Right ventricle myocardium inferior (tissue), 1 donor: ENCODE measurements at regions of chrX and their contacts with region 1.

Region 1: GRCh38 chrX:54044126-54044876 is at the start of gene PHF8:
- DNase-seq: peak; percentile 97
- ATAC-seq: peak; percentile 96
- total RNA-seq, gene PHF8: 10.1 TPM

Region 2: DNA sequence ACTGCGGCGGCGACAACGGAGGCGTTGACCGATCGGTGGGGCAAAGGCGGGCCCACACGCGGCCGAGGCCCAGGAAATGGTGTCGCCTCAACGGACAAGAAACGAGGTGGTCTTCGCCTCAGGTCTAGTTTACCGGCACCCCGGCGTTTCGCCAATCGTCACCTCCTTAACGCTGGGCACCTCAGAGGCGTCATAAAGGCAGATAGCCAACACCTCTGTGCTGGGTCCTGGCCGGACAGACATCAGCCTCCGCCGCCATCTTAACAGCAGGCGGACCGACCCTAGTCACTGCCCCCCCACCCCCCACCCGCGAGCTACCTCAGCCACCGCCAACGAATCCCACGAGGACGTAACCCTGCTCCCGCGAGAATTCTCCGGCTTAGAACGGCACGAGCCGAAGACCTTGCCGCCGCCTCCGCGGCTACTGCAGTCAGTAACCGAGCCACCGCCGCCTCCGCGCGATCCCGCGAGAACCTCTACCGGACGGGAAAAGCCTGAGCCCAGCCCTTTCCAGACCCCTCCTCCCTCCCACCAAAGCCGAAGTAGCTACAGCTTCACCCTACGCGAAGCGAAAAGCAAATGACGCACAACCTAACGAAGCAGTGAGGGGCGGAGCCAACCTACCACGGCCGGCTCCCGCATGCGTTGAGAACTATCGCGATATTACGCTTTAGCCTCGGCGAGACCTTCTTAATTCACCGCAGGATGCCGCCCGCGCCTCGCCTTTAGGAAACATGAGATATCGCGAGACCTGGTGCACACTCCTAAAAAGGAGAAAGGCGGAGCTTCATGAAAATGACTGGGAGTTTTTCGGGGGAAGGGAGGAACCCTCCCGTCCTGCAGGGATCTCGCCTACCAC is 360.5 kb before region 1 on chrX:
- intact Hi-C with region 1: loop called (anchors 10 kb)
- DNase-seq: peak; percentile 94
- ATAC-seq: peak; percentile 91

Region 3: DNA sequence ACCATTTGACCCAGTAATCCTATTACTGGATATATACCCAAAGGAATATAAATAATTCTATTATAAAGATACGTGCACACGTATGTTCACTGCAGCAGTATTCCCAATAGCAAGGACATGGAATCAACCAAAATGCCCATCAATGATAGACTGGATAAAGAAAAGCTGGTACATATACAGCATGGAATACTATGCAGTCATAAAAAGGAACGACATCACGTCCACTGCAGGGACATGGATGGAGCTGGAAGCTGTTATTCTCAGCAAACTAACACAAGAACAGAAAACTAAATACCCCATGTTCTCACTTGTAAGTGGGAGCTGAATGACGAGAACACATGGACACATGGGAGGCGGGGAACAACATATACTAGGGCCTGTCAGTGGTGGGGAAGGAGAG is 69.8 kb before region 1 on chrX:
- intact Hi-C with region 1: no loop called
- DNase-seq: no peak
- ATAC-seq: no peak

Region 4: GRCh38 chrX:54076903-54077302 is 32.6 kb after region 1 on chrX:
- intact Hi-C with region 1: no loop called
- DNase-seq: no peak
- ATAC-seq: no peak

Region 5: GRCh38 chrX:54182864-54183608 is 138.7 kb after region 1 on chrX and contains the start of gene FAM120C:
- intact Hi-C with region 1: loop called (anchors 5 kb)
- DNase-seq: peak; percentile 71
- ATAC-seq: peak; percentile 91
- total RNA-seq, gene FAM120C: 5.6 TPM